ENCODE measurements at regions of chr5 and their contacts with region 1.

Region 1: DNA sequence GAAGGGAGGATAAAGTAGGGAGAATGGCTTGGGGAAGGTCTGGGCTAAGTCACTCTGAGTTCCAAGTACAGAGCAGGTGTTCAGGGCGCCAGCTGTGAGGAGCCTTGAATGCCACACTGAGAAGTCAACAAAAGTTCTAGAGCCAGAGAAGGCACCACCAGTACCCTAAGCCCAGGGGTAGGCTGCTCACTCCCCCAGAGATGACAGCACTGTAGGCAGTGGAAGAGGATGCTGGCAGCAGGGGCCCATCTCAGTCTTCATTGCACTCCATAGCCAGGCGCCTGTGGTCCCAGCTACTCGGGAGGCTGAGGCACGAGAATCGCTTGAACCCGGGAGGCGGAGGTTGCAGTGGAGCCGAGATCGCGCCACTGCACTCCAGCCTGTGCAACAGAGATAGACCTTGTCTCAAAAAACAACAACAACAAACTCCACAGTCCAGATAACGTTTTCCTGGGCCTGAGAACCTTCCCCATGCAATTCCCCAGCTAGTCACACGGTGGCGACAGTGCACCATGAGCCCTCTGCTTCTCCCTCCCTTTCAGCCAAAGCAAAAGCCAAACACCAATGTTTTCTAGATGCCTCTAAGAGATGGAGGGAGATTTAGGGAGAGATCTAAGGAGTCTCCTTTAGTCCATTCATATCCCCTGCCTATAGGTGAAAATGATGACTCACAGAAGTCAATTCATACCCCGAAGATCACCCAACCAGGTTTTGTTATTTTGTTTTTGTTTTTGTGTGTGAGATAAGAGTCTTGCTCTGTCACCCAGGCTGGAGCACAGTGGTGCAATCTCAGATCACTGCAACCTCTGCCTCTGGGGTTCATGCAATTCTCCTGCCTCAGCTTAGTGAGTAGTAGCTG is 19.8 kb upstream of the NSD1 start:
- DNase-seq: peak; percentile 88
- H3K4me3 Mint-ChIP-seq: no peak overlapping the region
- H3K27ac Mint-ChIP-seq: no peak overlapping the region
- H3K4me1 Mint-ChIP-seq: peaks cover 27% of the 10 kb centered on the region
- H3K27me3 Mint-ChIP-seq: peaks cover 10% of the 10 kb centered on the region

Region 2: GRCh38 chr5:176660860-176661641 is 452.7 kb before region 1 on chr5:
- CTCF ChIA-PET with region 1: interaction called, 79 read pairs
- DNase-seq: peak; percentile 83
- H3K4me3 Mint-ChIP-seq: no peak overlapping the region
- H3K27ac Mint-ChIP-seq: no peak overlapping the region
- H3K4me1 Mint-ChIP-seq: peaks cover 33% of the 10 kb centered on the region
- H3K27me3 Mint-ChIP-seq: peaks cover 36% of the 10 kb centered on the region

Region 3: GRCh38 chr5:177049285-177049684 is 64.5 kb before region 1 on chr5:
- CTCF ChIA-PET with region 1: no interaction called
- DNase-seq: no peak
- H3K4me3 Mint-ChIP-seq: no peak overlapping the region
- H3K27ac Mint-ChIP-seq: no peak overlapping the region
- H3K4me1 Mint-ChIP-seq: no peaks in the 10 kb centered on the region
- H3K27me3 Mint-ChIP-seq: no peaks in the 10 kb centered on the region

Region 4: GRCh38 chr5:177086924-177087706 is 26.7 kb before region 1 on chr5:
- CTCF ChIA-PET with region 1: interaction called, 17 read pairs
- DNase-seq: peak; percentile 74
- H3K4me3 Mint-ChIP-seq: peak overlapping the region; percentile 28
- H3K27ac Mint-ChIP-seq: no peak overlapping the region
- H3K4me1 Mint-ChIP-seq: peaks cover 8% of the 10 kb centered on the region
- H3K27me3 Mint-ChIP-seq: peaks cover 81% of the 10 kb centered on the region

Region 5: DNA sequence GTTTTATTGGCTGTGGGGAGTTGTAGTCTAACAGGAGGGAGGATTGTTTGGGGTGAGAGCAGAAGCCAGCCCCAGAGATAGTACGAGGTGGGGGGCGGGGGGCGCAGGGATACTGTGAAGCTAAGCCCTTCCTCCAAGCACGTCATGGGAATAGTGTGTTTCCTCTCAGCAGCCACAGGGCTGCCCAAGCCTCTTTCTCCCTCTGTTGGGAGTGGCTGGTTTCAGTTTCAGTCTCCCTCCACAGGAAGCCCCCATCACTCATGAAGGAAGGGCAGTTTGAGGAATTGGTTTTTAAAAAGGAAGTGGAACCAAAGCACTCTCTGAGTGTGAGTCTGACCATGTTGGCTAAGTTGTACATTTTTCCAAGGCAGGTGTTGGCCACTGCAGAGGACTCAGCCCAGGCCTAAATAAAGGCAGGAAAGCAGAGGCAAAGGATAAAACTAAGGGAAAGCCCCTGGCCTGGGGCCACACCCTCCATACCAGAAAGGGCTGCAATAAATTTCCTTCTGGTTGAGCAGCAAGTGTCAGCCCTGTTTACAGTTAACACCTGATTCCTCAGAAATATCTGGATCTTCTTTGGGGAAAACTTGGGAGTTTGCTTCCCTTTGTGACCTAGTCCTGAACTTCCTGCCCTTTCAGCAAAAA is 186.6 kb after region 1 on chr5:
- CTCF ChIA-PET with region 1: interaction called, 18 read pairs
- DNase-seq: peak; percentile 80
- H3K4me3 Mint-ChIP-seq: peak overlapping the region; percentile 66
- H3K27ac Mint-ChIP-seq: peak overlapping the region; percentile 96
- H3K4me1 Mint-ChIP-seq: peaks cover 85% of the 10 kb centered on the region
- H3K27me3 Mint-ChIP-seq: no peaks in the 10 kb centered on the region

Region 6: GRCh38 chr5:177317959-177318377 is 204.2 kb after region 1 on chr5:
- CTCF ChIA-PET with region 1: interaction called, 75 read pairs
- DNase-seq: peak; percentile 85
- H3K4me3 Mint-ChIP-seq: no peak overlapping the region
- H3K27ac Mint-ChIP-seq: no peak overlapping the region
- H3K4me1 Mint-ChIP-seq: peaks cover 44% of the 10 kb centered on the region
- H3K27me3 Mint-ChIP-seq: no peaks in the 10 kb centered on the region

Region 7: DNA sequence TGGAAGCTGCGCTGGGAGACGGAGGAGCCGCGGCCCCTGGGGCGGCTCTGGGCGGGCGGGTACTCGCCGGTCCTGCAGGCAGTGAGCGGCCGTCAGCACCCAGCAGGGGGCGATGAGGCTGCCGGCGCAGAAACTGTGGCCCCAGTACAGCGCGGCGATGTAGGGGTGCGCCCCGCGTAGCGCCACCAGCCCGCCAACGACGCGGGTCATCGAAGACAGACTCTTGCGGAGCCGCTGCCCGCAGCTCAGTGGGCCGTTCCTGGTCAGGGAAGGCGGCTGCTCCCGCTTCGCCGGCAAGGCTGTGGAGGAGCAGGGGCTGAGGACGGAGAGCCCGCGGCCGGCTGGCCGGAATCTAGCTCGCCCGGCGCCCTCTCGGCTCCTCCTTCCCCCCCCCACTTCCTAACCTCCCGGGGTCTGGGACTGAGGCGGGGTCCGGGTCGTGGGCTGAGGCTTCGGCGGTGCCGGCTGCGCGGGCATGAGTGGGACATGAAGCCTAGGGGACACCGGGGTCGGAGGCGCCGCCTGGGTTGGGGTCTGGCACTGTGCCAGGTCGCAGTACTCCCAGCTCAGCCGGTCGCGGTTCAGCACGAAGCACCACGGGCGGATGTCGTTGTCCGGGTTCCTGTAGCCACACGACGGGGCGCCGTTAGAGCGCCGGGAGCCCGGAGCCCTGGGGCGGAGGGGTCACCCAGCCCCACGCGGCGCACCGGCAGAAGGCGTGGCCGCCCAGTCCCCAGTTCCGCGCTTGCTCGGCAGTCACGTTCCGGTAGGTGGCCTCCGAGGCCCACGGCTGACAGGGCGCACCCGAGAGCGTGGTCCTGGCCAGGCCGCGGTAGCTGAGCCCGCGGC is 290.2 kb after region 1 on chr5:
- CTCF ChIA-PET with region 1: interaction called, 24 read pairs
- DNase-seq: peak; percentile 90
- H3K4me3 Mint-ChIP-seq: peak overlapping the region; percentile 71
- H3K27ac Mint-ChIP-seq: no peak overlapping the region
- H3K4me1 Mint-ChIP-seq: peaks cover 38% of the 10 kb centered on the region
- H3K27me3 Mint-ChIP-seq: peaks cover 95% of the 10 kb centered on the region